ENCODE measurements at regions of chr5 and their contacts with region 1.

Region 1: GRCh38 chr5:87069974-87070624 is 197.6 kb upstream of the RASA1 start:
- DNase-seq: peak; percentile 31
- H3K4me3 ChIP-seq: no peak overlapping the region
- CTCF ChIP-seq: peak; percentile 55

Region 2: GRCh38 chr5:87268126-87268969 is 198.2 kb after region 1 on chr5:
- CTCF ChIA-PET with region 1: interaction called, 14 read pairs
- POLR2A ChIA-PET with region 1: no interaction called
- DNase-seq: no peak
- H3K4me3 ChIP-seq: peak overlapping the region; percentile 93
- CTCF ChIP-seq: no peak

Region 3: DNA sequence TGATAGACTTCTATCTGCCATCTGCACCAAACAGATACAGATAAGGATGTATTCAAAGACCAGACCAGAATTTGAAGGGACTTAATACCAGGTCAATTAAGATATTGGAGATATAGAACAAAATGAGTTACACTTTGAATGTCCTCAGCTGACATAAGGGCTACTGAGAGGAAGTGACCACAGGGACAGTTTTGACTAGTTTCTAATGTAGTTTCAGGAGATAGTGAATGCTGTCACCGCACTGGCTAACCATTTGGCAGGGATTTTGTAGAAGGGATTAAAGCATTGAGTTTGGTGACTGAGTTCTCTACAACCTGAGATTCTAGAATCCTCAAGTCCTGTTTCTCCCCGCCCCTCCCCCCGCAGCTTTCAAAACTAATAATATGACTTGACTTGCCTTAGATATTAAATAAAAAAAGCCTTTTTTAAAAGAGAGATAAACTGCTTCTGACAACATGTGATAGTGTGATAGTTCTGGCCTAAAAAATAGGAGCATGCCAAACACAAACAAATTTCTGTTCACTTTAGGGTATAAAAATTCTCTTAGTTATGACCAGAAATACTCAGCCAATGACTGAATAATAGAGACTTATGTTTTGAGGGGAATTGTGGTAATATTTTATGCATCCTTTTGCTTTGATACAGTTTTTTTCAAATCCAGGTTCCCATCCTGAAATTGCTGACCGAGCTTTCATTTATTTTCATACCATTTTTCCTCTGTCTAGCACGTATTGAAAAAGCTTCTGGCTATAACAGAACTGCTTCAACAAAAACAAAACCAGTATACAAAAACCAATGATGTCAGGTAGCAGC is 320.2 kb after region 1 on chr5:
- CTCF ChIA-PET with region 1: interaction called, 105 read pairs
- POLR2A ChIA-PET with region 1: no interaction called
- DNase-seq: no peak
- H3K4me3 ChIP-seq: no peak overlapping the region
- CTCF ChIP-seq: no peak

Region 4: GRCh38 chr5:87400305-87400899 is 330.3 kb after region 1 on chr5:
- CTCF ChIA-PET with region 1: interaction called, 105 read pairs
- POLR2A ChIA-PET with region 1: no interaction called
- DNase-seq: no peak
- H3K4me3 ChIP-seq: no peak overlapping the region
- CTCF ChIP-seq: peak; percentile 24